Heart left ventricle (tissue), 16 donors: ENCODE measurements at regions of chr6 and their contacts with region 1.

Region 1: GRCh38 chr6:33200219-33201146 is at the starts of genes RXRB and SLC39A7:
- DNase-seq: peak; percentile 99 to 100 (median 99)
- ATAC-seq: peak; percentile 86 to 92 (median 88)
- H3K4me3 ChIP-seq: peak within 1 kb of the TSS; percentile 59 to 98 (median 80)
- H3K27ac ChIP-seq: peak within 1 kb of the TSS; percentile 88 to 100 (median 98)
- H3K4me1 ChIP-seq: peaks cover 10 to 76% (median 54%) of the 10 kb centered on the region in 12 donors
- H3K27me3 ChIP-seq: no peaks in the 10 kb centered on the region
- CTCF ChIP-seq: no peak
- POLR2A ChIP-seq: peak in 1 of 2 donors; percentile 49
- total RNA-seq, gene RXRB: 20.7 to 39.6 (median 33.4) TPM
- total RNA-seq, gene SLC39A7: 42.4 to 70.4 (median 55.3) TPM

Region 2: GRCh38 chr6:32195652-32195901 is 1004.9 kb before region 1 on chr6:
- intact Hi-C with region 1: loop called in 1 of 10 experiments (anchors 10 kb)
- DNase-seq: peak; percentile 100
- ATAC-seq: peak in 3 of 4 donors; percentile 85 to 93 (median 86)
- H3K4me3 ChIP-seq: peak overlapping the region in 10 of 12 donors; percentile 65 to 93 (median 76)
- H3K27ac ChIP-seq: peak overlapping the region; percentile 92 to 100 (median 100)
- H3K4me1 ChIP-seq: peaks cover 7 to 61% (median 39%) of the 10 kb centered on the region in 12 donors
- H3K27me3 ChIP-seq: no peaks in the 10 kb centered on the region
- CTCF ChIP-seq: peak; percentile 48 to 73 (median 56)
- POLR2A ChIP-seq: no peak

Region 3: DNA sequence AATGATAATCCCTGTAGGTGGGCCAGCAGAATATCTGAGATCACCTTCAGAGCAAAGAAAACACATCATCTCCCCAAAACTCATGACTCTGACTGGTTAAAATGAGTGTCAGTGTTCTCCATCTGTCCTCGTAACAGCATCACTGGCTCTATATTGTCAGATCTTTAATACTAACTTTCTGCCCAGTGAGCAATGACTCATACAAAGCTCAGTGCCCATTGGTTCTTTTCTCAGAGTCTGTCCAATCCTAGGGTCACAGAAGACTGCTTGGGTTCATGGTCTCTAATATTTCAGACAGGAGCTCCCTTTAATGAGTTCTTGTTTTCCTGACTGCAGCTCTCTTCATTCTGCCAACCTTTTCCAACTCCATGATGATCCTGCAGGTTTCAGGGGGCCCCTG is 88.3 kb before region 1 on chr6:
- intact Hi-C with region 1: no loop called
- DNase-seq: peak in 1 of 5 donors; percentile 29
- ATAC-seq: peak; percentile 82 to 96 (median 94)
- H3K4me3 ChIP-seq: no peak overlapping the region
- H3K27ac ChIP-seq: peak overlapping the region in 1 of 12 donors; percentile 21
- H3K4me1 ChIP-seq: peaks cover 0 to 31% (median 0%) of the 10 kb centered on the region in 12 donors
- H3K27me3 ChIP-seq: peaks cover 6 to 55% (median 15%) of the 10 kb centered on the region in 9 donors
- CTCF ChIP-seq: no peak
- POLR2A ChIP-seq: no peak

Region 4: DNA sequence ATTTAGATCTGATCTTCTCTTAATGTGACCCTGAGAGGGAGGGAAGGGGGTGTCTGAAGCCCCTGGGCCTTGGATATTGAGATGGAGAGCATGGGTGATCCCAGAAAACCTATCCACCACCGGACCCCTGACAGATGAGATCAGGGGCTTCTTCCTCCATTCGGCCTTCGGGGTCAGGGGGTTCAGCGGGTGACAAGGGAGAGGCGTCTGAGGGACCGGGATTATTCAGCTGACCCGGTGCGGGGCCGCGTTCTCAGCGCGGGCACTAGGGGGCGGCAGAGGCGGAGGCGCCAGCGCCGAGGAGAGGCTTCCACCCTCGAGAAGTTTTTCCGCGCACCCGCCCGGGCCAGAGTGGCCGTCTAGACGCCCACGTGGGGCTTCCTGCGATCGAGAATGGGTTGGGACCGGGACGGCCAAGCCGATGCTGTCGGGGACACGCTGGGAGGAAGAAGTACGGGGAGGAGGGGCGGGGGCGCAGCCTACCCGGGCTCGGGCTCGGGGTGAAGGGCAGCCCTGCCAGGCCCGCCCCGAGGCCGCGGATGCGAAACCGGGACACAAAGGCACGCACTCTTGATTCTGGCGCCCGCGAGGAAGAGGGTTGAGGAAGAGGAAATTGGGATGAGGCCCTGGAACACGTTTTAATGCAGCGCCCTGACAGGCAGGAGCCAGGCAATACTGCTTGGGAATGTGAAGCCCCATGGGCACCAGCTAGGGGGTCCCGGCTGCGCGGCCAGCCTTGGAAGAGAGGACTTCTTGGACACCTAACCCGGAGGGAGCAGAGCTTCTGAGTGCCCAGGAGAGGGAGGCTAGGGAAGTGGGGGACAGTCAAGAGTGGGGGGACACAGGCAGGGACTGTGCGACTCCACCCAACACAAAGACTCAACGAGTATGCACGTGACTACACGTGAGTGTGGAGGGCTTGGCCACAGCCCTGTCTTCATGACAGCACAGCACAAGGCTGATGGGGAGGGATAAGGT is 38.8 kb before region 1 on chr6:
- intact Hi-C with region 1: loop called in 9 of 10 experiments (anchors 2 to 5 kb)
- DNase-seq: peak; percentile 84 to 92 (median 86)
- ATAC-seq: peak; percentile 38 to 94 (median 88)
- H3K4me3 ChIP-seq: peak overlapping the region in 11 of 12 donors; percentile 34 to 64 (median 52)
- H3K27ac ChIP-seq: peak overlapping the region in 8 of 12 donors; percentile 37 to 56 (median 54)
- H3K4me1 ChIP-seq: peaks cover 0 to 21% (median 10%) of the 10 kb centered on the region in 12 donors
- H3K27me3 ChIP-seq: no peaks in the 10 kb centered on the region
- CTCF ChIP-seq: peak; percentile 89 to 99 (median 94)
- POLR2A ChIP-seq: no peak

Region 5: DNA sequence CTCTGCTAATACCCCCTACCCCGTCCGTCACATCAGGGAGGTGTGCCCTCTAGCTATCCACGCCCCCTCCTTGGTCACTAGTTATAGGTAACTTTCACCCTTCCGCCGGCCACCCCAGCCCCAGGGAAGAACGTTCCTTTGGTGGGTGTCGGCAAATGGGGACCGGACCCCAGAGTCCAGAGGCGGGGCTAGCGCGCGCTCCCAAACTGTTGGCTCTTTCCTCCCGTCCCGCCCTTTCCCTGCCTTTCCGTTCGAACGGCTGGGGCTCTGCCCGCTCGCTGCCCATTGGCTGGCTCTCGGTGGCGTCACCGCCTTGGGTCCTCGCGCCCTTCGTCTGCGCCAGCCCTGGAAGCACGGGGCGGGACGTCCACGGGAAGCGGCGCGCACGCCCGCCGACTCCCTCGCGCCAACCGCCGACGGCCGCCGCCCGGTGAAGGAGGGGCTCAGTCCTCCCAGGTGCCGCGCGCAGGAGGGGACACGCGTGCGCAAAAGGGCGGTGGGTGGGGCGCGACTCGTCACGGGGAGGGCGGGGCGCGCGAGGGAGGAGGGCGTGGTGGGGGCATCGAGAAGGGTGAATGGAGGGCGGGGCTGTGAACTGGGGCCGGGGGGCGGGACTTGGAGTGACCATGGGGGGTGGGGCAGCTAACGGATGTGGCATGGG is 209.7 kb after region 1 on chr6:
- intact Hi-C with region 1: loop called in 1 of 10 experiments (anchors 5 kb)
- DNase-seq: peak; percentile 98 to 99 (median 99)
- ATAC-seq: peak; percentile 85 to 92 (median 91)
- H3K4me3 ChIP-seq: peak overlapping the region; percentile 68 to 100 (median 94)
- H3K27ac ChIP-seq: peak overlapping the region; percentile 94 to 100 (median 99)
- H3K4me1 ChIP-seq: peaks cover 0 to 24% (median 14%) of the 10 kb centered on the region in 12 donors
- H3K27me3 ChIP-seq: no peaks in the 10 kb centered on the region
- CTCF ChIP-seq: no peak
- POLR2A ChIP-seq: peak in 1 of 2 donors; percentile 64